ENCODE measurements at regions of chr3 and their contacts with region 1.

Region 1: GRCh38 chr3:194269610-194270145 is 81.5 kb downstream of the CPN2 start:
- DNase-seq: peak in 2 of 10 donors; percentile 56 to 60
- H3K4me3 ChIP-seq: no peak overlapping the region
- H3K27ac ChIP-seq: peak overlapping the region in 14 of 59 donors; percentile 10 to 97 (median 94)
- H3K27me3 ChIP-seq: no peaks in the 10 kb centered on the region
- CTCF ChIP-seq: peak in 25 of 56 donors; percentile 9 to 39 (median 22)

Region 2: GRCh38 chr3:194141415-194142155 is 128.1 kb before region 1 on chr3:
- intact Hi-C with region 1: loop called (anchors 2 to 5 kb)
- DNase-seq: peak; percentile 32 to 90 (median 78)
- H3K4me3 ChIP-seq: peak overlapping the region; percentile 8 to 75 (median 54)
- H3K27ac ChIP-seq: peak overlapping the region in 58 of 59 donors; percentile 36 to 95 (median 84)
- H3K27me3 ChIP-seq: peaks cover 0 to 3% (median 0%) of the 10 kb centered on the region in 45 donors
- CTCF ChIP-seq: peak in 5 of 56 donors; percentile 8 to 33 (median 17)

Region 3: GRCh38 chr3:194184265-194184751 is 85.4 kb before region 1 on chr3:
- intact Hi-C with region 1: no loop called
- DNase-seq: no peak
- H3K4me3 ChIP-seq: no peak overlapping the region
- H3K27ac ChIP-seq: no peak overlapping the region
- H3K27me3 ChIP-seq: peaks cover 0 to 3% (median 0%) of the 10 kb centered on the region in 45 donors
- CTCF ChIP-seq: no peak

Region 4: DNA sequence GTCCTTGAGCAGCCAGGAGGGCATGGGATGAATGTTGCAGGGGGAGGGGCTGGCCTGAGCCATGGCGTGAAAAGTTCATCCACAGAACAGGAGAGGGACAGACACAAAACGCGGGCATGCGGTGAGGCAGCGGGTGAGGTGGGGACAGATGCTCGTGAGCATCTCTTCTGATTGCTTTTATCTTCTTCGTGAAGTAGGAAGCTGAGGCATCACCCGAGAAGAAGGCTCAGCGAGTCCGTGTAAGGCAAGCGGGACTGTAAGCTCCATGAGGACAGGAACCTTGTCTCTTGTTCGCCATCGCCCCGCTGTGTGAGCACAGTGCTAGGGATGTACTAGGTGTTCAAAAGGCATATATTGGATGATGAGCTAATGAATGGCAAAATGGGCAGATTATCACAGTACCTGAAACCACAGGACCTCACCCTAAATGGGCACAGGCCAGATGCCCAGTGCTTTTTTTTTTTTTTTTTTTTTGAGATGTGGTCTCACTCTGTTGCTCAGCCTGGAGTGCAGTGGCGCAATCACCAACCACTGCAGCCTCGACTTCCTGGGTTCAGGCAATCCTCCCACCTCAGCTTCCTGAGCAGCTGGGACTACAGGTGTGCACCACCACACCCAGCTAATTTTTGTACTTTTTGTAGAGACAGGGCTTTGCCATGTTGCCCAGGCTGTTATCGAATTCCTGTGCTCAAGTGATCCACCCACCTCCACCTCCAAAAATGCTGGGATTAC is 34.7 kb after region 1 on chr3:
- intact Hi-C with region 1: no loop called
- DNase-seq: no peak
- H3K4me3 ChIP-seq: no peak overlapping the region
- H3K27ac ChIP-seq: no peak overlapping the region
- H3K27me3 ChIP-seq: peaks cover 0 to 3% (median 0%) of the 10 kb centered on the region in 45 donors
- CTCF ChIP-seq: no peak

Region 5: GRCh38 chr3:194344012-194344411 is 74.3 kb after region 1 on chr3:
- intact Hi-C with region 1: no loop called
- DNase-seq: peak; percentile 58 to 85 (median 69)
- H3K4me3 ChIP-seq: no peak overlapping the region
- H3K27ac ChIP-seq: no peak overlapping the region
- H3K27me3 ChIP-seq: peaks cover 0 to 10% (median 0%) of the 10 kb centered on the region in 45 donors
- CTCF ChIP-seq: peak; percentile 69 to 96 (median 89)

Measured in dorsolateral prefrontal cortex (tissue), 120 donors.